ENCODE measurements at regions of chr1 and their contacts with region 1.

Region 1: GRCh38 chr1:163789911-163790310 is 468.2 kb downstream of the NUF2 start:
- DNase-seq: no peak
- H3K4me3 ChIP-seq: no peak overlapping the region
- H3K27ac ChIP-seq: no peak overlapping the region
- H3K4me1 ChIP-seq: no peaks in the 10 kb centered on the region
- H3K27me3 ChIP-seq: no peaks in the 10 kb centered on the region
- CTCF ChIP-seq: no peak
- POLR2A ChIP-seq: no peak

Region 2: GRCh38 chr1:162404550-162405160 is 1385.3 kb before region 1 on chr1:
- intact Hi-C with region 1: loop called (anchors 10 kb)
- DNase-seq: no peak
- H3K4me3 ChIP-seq: no peak overlapping the region
- H3K27ac ChIP-seq: no peak overlapping the region
- H3K4me1 ChIP-seq: no peaks in the 10 kb centered on the region
- H3K27me3 ChIP-seq: no peaks in the 10 kb centered on the region
- CTCF ChIP-seq: no peak
- POLR2A ChIP-seq: no peak

Region 3: GRCh38 chr1:163085041-163085903 is 704.6 kb before region 1 on chr1:
- intact Hi-C with region 1: no loop called
- DNase-seq: no peak
- H3K4me3 ChIP-seq: no peak overlapping the region
- H3K27ac ChIP-seq: no peak overlapping the region
- H3K4me1 ChIP-seq: no peaks in the 10 kb centered on the region
- H3K27me3 ChIP-seq: no peaks in the 10 kb centered on the region
- CTCF ChIP-seq: no peak
- POLR2A ChIP-seq: no peak

Region 4: DNA sequence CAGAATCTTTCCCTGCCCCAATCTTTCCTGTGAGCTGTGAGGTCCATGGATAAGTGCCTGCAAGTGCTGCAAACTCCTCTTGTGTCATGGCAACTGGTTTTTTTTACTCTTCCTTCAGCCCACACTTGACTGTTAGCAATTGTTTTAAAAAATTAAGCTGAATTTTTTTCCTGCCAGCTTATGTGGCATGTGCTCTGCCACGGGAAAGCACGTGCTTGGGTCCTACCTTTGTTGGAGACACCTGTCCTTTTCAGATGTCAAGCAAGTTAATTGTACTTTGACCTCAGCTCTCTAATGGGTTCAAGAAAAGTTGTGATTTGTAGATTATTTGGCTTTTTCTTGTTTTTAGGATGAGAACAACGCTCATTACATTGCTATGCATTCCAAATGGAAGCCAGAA is 69.6 kb before region 1 on chr1:
- intact Hi-C with region 1: no loop called
- DNase-seq: no peak
- H3K4me3 ChIP-seq: no peak overlapping the region
- H3K27ac ChIP-seq: no peak overlapping the region
- H3K4me1 ChIP-seq: no peaks in the 10 kb centered on the region
- H3K27me3 ChIP-seq: no peaks in the 10 kb centered on the region
- CTCF ChIP-seq: no peak
- POLR2A ChIP-seq: no peak

Measured in breast epithelium (tissue), 4 donors.